ENCODE measurements at regions of chr1 and their contacts with region 1.

Region 1: DNA sequence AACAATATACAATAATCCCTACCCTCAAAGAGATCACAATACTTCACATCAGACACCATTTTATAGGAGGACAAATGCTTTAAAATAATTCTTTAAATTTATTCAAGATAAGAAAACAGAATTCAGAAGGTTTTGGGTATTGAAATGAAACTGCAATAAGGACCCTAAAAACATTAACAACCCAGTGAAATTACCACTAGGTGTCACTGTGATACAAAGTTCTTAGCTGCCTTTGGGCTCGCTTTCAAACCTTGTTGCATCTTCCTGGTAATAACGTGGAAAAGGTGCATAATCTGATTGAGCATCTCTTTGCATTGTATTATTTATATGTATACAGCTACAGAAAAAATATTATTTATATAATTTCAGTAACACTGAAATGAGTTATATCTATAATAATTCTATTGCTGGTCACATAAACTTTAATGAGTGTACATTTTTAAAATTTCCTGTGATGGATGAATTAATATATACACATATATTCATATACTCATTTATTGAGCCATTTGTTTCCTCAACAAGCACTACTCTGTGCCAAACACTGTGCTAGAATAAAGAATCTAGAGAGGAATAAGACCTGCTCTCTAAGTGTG is 185.2 kb downstream of the FAF1 start:
- DNase-seq: no peak

Region 2: GRCh38 chr1:50271968-50272578 is 502.8 kb before region 1 on chr1:
- intact Hi-C with region 1: no loop called
- DNase-seq: no peak

Region 3: GRCh38 chr1:51032902-51033301 is 258.0 kb after region 1 on chr1:
- intact Hi-C with region 1: loop called in 1 of 2 experiments (anchors 10 kb)
- DNase-seq: no peak

Region 4: DNA sequence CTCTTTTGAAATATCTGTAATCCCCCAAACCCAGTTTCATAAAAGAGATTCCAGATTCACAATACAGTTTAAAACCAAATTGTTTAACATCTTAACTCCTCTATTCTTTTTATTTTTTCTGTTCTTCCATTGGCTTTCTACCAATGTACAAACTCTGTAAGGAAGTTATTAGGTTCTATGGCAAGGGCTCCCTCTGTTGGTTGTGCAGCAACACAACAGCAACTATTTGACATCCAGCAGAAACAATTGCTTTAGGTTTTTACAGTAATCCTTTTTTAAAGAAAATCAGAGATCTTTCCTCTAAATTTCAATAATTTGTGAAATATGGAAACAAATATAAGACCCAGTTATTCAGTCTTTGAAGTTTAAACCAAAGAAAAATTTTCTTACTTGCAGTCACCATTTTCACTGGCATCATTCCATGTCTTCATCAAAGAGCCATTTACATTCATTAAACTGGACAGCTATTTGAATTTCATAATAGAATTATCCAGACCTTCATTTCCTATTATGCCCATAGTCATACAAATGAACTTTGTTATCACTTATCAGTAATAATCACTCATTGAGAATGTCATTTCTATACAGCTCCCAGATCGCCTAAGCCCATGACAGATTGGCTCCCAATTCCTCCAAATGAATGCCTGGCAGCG is 414.7 kb after region 1 on chr1:
- intact Hi-C with region 1: loop called in 1 of 2 experiments (anchors 10 kb)
- DNase-seq: no peak